ENCODE measurements at regions of chr21 and their contacts with region 1.

Region 1: GRCh38 chr21:44927587-44928461 is 7.1 kb upstream of the ITGB2 start:
- DNase-seq: peak; percentile 68
- H3K4me3 Mint-ChIP-seq: peak overlapping the region; percentile 88
- H3K27ac Mint-ChIP-seq: peak overlapping the region; percentile 98
- H3K4me1 Mint-ChIP-seq: peaks cover 83% of the 10 kb centered on the region
- H3K27me3 Mint-ChIP-seq: no peaks in the 10 kb centered on the region

Region 2: DNA sequence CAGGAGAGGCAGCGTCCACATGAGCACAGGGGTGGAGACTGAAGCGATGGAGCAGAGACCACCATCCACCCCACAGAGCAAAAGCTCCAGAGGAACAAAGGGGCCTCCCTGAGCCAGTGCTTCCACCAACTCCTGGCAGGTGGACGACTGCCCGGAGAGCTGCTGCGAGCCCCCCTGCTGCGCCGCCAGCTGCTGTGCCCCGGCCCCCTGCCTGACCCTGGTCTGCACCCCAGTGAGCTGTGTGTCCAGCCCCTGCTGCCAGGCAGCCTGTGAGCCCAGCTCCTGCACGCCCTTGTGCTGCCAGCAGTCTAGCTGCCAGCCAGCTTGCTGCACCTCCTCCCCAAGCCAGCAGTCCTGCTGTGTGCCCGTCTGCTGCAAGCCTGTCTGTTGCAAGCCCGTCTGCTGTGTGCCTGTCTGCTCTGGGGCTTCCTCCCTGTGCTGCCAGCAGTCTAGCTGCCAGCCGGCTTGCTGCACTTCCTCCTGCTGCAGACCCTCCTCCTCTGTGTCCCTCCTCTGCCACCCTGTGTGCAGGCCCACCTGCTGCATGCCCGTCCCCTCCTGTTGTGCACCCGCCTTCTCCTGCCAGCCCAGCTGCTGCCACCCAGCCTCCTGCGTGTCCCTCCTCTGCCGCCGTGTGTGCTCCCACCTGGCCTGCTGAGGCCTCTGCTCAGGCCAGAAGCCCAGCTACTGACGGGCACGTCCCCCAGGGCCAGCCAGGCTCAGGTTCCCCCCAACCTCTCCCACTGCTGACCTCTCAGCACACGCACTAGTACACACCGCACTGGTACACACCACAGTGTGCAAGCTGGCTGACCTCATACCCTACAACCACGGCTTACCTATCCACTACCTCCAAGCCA is 225.5 kb before region 1 on chr21:
- intact Hi-C with region 1: no loop called
- DNase-seq: no peak
- H3K4me3 Mint-ChIP-seq: no peak overlapping the region
- H3K27ac Mint-ChIP-seq: no peak overlapping the region
- H3K4me1 Mint-ChIP-seq: no peaks in the 10 kb centered on the region
- H3K27me3 Mint-ChIP-seq: peaks cover 54% of the 10 kb centered on the region

Region 3: GRCh38 chr21:44801468-44802395 is 126.1 kb before region 1 on chr21 and contains the start of gene UBE2G2:
- intact Hi-C with region 1: loop called (anchors 1 kb)
- DNase-seq: peak; percentile 87
- H3K4me3 Mint-ChIP-seq: peak within 1 kb of the TSS; percentile 99
- H3K27ac Mint-ChIP-seq: peak within 1 kb of the TSS; percentile 94
- H3K4me1 Mint-ChIP-seq: peaks cover 54% of the 10 kb centered on the region
- H3K27me3 Mint-ChIP-seq: no peaks in the 10 kb centered on the region
- total RNA-seq, gene UBE2G2: 137 and 151 TPM in 2 replicates

Region 4: DNA sequence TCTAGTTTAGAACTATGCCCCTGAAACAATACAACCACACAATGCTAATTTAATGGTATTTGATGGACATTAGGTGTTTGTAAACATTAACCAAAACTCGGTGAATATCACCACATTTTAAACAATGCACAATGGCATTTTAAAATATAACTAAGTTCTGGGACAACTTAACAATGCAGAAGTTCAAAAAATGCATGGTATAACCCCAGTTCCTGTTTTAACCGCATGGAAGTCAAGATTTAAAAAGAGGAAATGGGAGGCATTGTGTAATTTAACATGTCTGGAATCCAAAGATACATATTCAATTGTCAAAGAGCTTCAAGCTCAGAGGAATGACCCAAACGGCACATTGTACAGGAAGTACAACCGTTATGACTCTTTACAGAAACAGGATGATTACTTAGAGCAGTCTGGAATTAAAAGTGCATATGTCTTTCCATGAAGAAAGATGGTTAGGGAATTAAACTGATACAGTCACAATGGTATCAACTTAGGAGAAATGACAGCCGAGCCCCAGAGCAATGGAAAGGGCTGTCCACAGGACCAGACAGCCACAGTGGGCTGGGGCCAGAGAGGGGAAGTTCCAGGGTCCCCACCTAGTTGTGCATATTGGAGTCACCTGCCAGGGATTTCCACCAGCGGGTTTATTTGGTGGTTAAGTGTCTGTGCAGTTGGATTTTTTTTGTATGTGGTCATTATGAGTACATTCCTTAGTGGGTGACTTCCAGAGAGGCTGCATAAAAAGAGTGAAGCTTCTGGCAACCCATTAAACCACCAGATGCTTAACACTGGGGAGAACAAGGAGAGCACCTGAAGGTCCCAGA is 46.9 kb before region 1 on chr21:
- intact Hi-C with region 1: loop called (anchors 2 kb)
- DNase-seq: no peak
- H3K4me3 Mint-ChIP-seq: peak overlapping the region; percentile 13
- H3K27ac Mint-ChIP-seq: peak overlapping the region; percentile 87
- H3K4me1 Mint-ChIP-seq: peaks cover 30% of the 10 kb centered on the region
- H3K27me3 Mint-ChIP-seq: no peaks in the 10 kb centered on the region

Region 5: DNA sequence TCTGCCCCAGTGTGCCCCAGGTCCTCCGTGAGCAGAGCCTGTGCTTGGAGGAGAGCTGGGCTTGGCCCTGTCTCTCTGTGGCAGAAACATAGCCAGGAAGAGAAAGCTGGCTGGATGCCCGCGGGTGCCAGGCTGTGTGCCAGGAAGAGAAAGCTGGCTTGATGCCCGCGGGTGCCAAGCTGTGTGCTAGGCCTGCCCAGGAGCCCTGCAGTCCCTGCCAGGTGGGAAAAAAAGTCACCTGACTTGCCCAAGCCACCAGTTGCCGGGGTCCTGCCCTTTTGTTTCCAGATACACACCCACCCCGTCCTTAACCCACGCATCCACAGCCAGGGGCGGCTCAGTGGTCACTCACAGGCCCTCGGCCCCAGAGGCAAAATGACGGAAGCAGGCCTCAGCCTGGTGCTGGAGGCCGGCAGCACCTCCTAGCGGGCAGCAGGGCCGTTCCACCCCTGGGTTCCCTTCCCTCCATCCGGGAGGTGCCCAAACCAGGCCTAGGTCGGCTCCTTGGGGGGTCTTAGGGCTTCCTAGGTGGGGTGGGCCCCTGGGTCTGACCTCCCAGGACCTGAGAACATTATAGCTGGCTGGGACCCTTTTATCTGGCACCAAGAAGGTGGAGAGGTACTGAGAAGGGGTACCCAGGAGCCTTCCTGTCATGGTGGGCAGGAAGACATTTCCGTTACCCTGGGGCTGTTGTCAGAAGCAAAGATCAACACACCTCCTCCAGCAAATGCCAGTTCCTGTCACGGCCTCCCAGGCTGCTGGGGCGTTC is 16.3 kb before region 1 on chr21:
- intact Hi-C with region 1: loop called (anchors 1 kb)
- DNase-seq: peak; percentile 50
- H3K4me3 Mint-ChIP-seq: peak overlapping the region; percentile 78
- H3K27ac Mint-ChIP-seq: peak overlapping the region; percentile 90
- H3K4me1 Mint-ChIP-seq: peaks cover 63% of the 10 kb centered on the region
- H3K27me3 Mint-ChIP-seq: no peaks in the 10 kb centered on the region

Measured in activated T-helper 1 cell treated with anti-CD3 and anti-CD28 coated beads, Interleukin-12 subunit alpha, Interleukin-12 subunit beta, Interleukin-2, Interleukin-4 antibody, amounts not matched to agents 30 ng/mL and 10 ng/mL and 1 ng/mL, durations not matched to agents 14 hours and 24 hours and 36 hours (primary cell).